B cell (primary cell): ENCODE measurements at regions of chr3 and their contacts with region 1.

Region 1: DNA sequence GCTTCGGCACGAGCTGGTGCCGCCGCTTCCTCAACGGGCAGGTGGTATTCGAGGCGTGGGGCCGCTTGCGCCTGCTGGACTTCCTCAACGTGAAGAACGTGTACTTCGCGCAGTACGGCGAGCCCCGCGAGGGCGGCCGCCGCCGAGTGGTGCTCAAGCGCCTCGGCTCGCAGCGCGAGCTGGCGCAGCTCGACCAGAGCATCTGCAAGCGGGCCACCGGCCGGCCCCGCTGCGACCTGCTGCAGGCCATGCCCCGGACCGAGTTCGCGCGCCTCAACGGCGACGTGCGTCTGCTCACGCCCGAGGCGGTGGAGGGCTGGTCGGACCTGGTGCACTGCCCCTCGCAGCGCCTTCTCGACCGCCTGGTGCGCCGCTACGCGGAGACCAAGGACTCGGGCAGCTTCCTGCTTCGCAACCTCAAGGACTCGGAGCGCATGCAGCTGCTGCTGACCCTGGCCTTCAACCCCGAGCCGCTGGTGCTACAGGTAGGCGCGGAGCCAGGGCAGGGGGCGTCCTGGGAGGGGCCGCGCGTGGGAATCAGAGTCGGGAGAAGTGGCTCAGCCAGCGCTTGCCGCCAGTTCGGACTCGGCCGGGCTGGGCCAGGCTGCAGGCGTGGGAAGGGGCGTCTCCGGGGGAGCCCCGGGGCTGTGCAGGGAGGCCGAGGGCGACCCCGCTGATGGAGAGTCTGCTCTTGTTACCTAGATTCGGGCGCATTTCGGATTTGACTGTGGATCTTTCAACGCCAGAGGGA is 1.1 kb downstream of the DIPK2A start:
- DNase-seq: peak; percentile 88
- ATAC-seq: peak; percentile 25
- H3K4me3 ChIP-seq: peak overlapping the region; percentile 84 to 92 (median 90)
- H3K4me3 Mint-ChIP-seq: peak overlapping the region; percentile 97
- H3K27ac ChIP-seq: peak overlapping the region; percentile 91 to 93
- H3K27ac Mint-ChIP-seq: peak overlapping the region; percentile 96
- H3K4me1 ChIP-seq: peaks cover 17 to 46% of the 10 kb centered on the region in 2 donors
- H3K4me1 Mint-ChIP-seq: peaks cover 40% of the 10 kb centered on the region
- H3K27me3 ChIP-seq: no peaks in the 10 kb centered on the region
- H3K27me3 Mint-ChIP-seq: no peaks in the 10 kb centered on the region
- CTCF ChIP-seq: peak; percentile 67

Region 2: GRCh38 chr3:142578327-142579223 is 1394.1 kb before region 1 on chr3 and contains the start of gene ATR:
- CTCF ChIA-PET with region 1: no interaction called
- POLR2A ChIA-PET with region 1: interaction called, 4 read pairs
- intact Hi-C with region 1: loop called (anchors 1 kb)
- DNase-seq: peak; percentile 97
- ATAC-seq: peak; percentile 94
- H3K4me3 ChIP-seq: peak within 1 kb of the TSS; percentile 70 to 91 (median 78)
- H3K4me3 Mint-ChIP-seq: peak within 1 kb of the TSS; percentile 93
- H3K27ac ChIP-seq: peak within 1 kb of the TSS; percentile 97 to 98
- H3K27ac Mint-ChIP-seq: peak within 1 kb of the TSS; percentile 98
- H3K4me1 ChIP-seq: peaks cover 27% of the 10 kb centered on the region in 2 donors
- H3K4me1 Mint-ChIP-seq: peaks cover 47% of the 10 kb centered on the region
- H3K27me3 ChIP-seq: peaks cover 0 to 7% (median 0%) of the 10 kb centered on the region in 4 experiments
- H3K27me3 Mint-ChIP-seq: peaks cover 9% of the 10 kb centered on the region
- CTCF ChIP-seq: no peak
- total RNA-seq, gene ATR: 46.7 and 47.4 TPM in 2 replicates

Region 3: GRCh38 chr3:143119009-143119914 is 853.4 kb before region 1 on chr3 and contains the start of gene CHST2:
- CTCF ChIA-PET with region 1: no interaction called
- POLR2A ChIA-PET with region 1: no interaction called
- intact Hi-C with region 1: loop called (anchors 5 kb)
- DNase-seq: peak; percentile 87
- ATAC-seq: peak; percentile 88
- H3K4me3 ChIP-seq: peak within 1 kb of the TSS; percentile 75 to 95 (median 91)
- H3K4me3 Mint-ChIP-seq: peak within 1 kb of the TSS; percentile 94
- H3K27ac ChIP-seq: peak within 1 kb of the TSS; percentile 63 to 72
- H3K27ac Mint-ChIP-seq: peak within 1 kb of the TSS; percentile 95
- H3K4me1 ChIP-seq: peaks cover 25 to 32% of the 10 kb centered on the region in 2 donors
- H3K4me1 Mint-ChIP-seq: peaks cover 31% of the 10 kb centered on the region
- H3K27me3 ChIP-seq: peaks cover 0 to 3% (median 0%) of the 10 kb centered on the region in 4 experiments
- H3K27me3 Mint-ChIP-seq: no peaks in the 10 kb centered on the region
- CTCF ChIP-seq: no peak
- total RNA-seq, gene CHST2: 24.8 and 25.0 TPM in 2 replicates

Region 4: GRCh38 chr3:143151004-143151731 is 821.5 kb before region 1 on chr3:
- CTCF ChIA-PET with region 1: no interaction called
- POLR2A ChIA-PET with region 1: no interaction called
- intact Hi-C with region 1: no loop called
- DNase-seq: no peak
- ATAC-seq: no peak
- H3K4me3 ChIP-seq: no peak overlapping the region
- H3K4me3 Mint-ChIP-seq: no peak overlapping the region
- H3K27ac ChIP-seq: no peak overlapping the region
- H3K27ac Mint-ChIP-seq: no peak overlapping the region
- H3K4me1 ChIP-seq: no peaks in the 10 kb centered on the region
- H3K4me1 Mint-ChIP-seq: peaks cover 7% of the 10 kb centered on the region
- H3K27me3 ChIP-seq: no peaks in the 10 kb centered on the region
- H3K27me3 Mint-ChIP-seq: no peaks in the 10 kb centered on the region
- CTCF ChIP-seq: no peak

Region 5: GRCh38 chr3:143847787-143848631 is 124.7 kb before region 1 on chr3 and contains the start of gene SLC9A9:
- CTCF ChIA-PET with region 1: no interaction called
- POLR2A ChIA-PET with region 1: no interaction called
- intact Hi-C with region 1: loop called (anchors 2 kb)
- DNase-seq: peak; percentile 61
- ATAC-seq: peak; percentile 85
- H3K4me3 ChIP-seq: peak within 1 kb of the TSS; percentile 60 to 99 (median 95)
- H3K4me3 Mint-ChIP-seq: peak within 1 kb of the TSS; percentile 99
- H3K27ac ChIP-seq: peak within 1 kb of the TSS; percentile 27 to 86
- H3K27ac Mint-ChIP-seq: peak within 1 kb of the TSS; percentile 95
- H3K4me1 ChIP-seq: peaks cover 8 to 15% of the 10 kb centered on the region in 2 donors
- H3K4me1 Mint-ChIP-seq: peaks cover 51% of the 10 kb centered on the region
- H3K27me3 ChIP-seq: no peaks in the 10 kb centered on the region
- H3K27me3 Mint-ChIP-seq: no peaks in the 10 kb centered on the region
- CTCF ChIP-seq: no peak
- total RNA-seq, gene SLC9A9: 17.3 and 18.7 TPM in 2 replicates

Region 6: DNA sequence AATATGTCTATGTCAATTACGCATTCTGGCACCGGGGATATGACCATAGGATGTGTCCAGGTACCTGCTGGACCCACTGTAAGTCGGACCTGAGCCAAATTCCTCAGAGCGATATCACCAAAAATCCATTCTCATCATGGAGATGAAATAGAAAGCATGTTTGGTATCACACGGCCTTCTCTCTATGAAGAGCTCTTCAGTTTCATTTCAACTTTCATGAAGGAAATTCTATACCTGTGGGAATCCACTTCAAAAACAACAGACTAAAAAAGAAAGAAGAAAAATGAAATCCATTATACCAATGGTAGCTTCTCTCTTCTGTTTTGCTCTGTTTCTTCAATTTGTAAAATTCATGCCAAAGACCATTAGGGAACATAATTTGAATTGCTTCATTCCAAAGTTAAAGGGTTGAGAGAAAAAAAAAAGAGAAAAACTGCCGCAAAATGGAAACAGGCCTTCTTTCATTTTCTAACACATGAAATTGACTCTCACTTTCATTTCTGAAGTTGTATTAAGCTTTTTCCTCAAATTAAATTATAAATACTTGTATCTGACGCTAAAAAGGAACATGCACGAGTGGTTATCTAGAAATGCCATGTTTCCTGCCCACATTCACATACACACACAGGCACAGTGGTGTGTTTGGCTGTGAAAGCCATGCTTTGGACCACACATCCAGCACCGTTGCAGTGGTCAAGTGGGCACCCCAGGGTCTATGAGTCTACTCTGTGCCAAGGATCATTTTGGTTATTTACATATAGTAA is 48.0 kb before region 1 on chr3:
- CTCF ChIA-PET with region 1: interaction called, 7 read pairs
- POLR2A ChIA-PET with region 1: interaction called, 19 read pairs
- intact Hi-C with region 1: loop called (anchors 2 kb)
- DNase-seq: peak; percentile 58
- ATAC-seq: peak; percentile 78
- H3K4me3 ChIP-seq: peak overlapping the region in 3 of 5 experiments; percentile 16 to 43 (median 25)
- H3K4me3 Mint-ChIP-seq: peak overlapping the region; percentile 84
- H3K27ac ChIP-seq: peak overlapping the region; percentile 73 to 86
- H3K27ac Mint-ChIP-seq: peak overlapping the region; percentile 96
- H3K4me1 ChIP-seq: peaks cover 68 to 76% of the 10 kb centered on the region in 2 donors
- H3K4me1 Mint-ChIP-seq: peaks cover 79% of the 10 kb centered on the region
- H3K27me3 ChIP-seq: no peaks in the 10 kb centered on the region
- H3K27me3 Mint-ChIP-seq: no peaks in the 10 kb centered on the region
- CTCF ChIP-seq: no peak

Region 7: DNA sequence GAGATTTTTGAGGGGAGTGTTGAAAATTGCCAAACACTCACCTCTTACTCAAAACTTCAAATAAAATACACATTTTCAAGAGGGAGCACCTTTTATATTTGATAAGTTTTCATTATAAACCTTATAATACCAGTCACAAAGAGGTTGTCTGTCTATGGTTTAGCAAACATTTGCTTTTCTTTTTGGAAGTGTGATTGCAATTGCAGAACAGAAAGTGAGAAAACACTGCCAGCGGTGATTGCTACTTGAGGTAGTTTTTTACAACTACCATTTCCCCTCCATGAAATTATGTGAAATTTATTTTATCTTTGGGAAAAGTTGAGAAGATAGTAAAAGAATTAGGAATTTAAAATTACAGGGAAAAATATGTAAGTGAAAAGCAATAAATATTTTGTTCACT is 19.0 kb after region 1 on chr3:
- CTCF ChIA-PET with region 1: interaction called, 8 read pairs
- POLR2A ChIA-PET with region 1: no interaction called
- intact Hi-C with region 1: loop called (anchors 2 kb)
- DNase-seq: no peak
- ATAC-seq: no peak
- H3K4me3 ChIP-seq: no peak overlapping the region
- H3K4me3 Mint-ChIP-seq: no peak overlapping the region
- H3K27ac ChIP-seq: no peak overlapping the region
- H3K27ac Mint-ChIP-seq: no peak overlapping the region
- H3K4me1 ChIP-seq: no peaks in the 10 kb centered on the region
- H3K4me1 Mint-ChIP-seq: peaks cover 31% of the 10 kb centered on the region
- H3K27me3 ChIP-seq: no peaks in the 10 kb centered on the region
- H3K27me3 Mint-ChIP-seq: no peaks in the 10 kb centered on the region
- CTCF ChIP-seq: no peak

Region 8: GRCh38 chr3:144102421-144102820 is 129.7 kb after region 1 on chr3:
- CTCF ChIA-PET with region 1: no interaction called
- POLR2A ChIA-PET with region 1: no interaction called
- intact Hi-C with region 1: no loop called
- DNase-seq: no peak
- ATAC-seq: no peak
- H3K4me3 ChIP-seq: no peak overlapping the region
- H3K4me3 Mint-ChIP-seq: no peak overlapping the region
- H3K27ac ChIP-seq: no peak overlapping the region
- H3K27ac Mint-ChIP-seq: no peak overlapping the region
- H3K4me1 ChIP-seq: no peaks in the 10 kb centered on the region
- H3K4me1 Mint-ChIP-seq: no peaks in the 10 kb centered on the region
- H3K27me3 ChIP-seq: peaks cover 0 to 6% (median 0%) of the 10 kb centered on the region in 4 experiments
- H3K27me3 Mint-ChIP-seq: peaks cover 8% of the 10 kb centered on the region
- CTCF ChIP-seq: no peak

Region 9: GRCh38 chr3:144162079-144162478 is 189.4 kb after region 1 on chr3:
- CTCF ChIA-PET with region 1: no interaction called
- POLR2A ChIA-PET with region 1: no interaction called
- intact Hi-C with region 1: no loop called
- DNase-seq: no peak
- ATAC-seq: no peak
- H3K4me3 ChIP-seq: no peak overlapping the region
- H3K4me3 Mint-ChIP-seq: no peak overlapping the region
- H3K27ac ChIP-seq: no peak overlapping the region
- H3K27ac Mint-ChIP-seq: no peak overlapping the region
- H3K4me1 ChIP-seq: peaks cover 0 to 3% of the 10 kb centered on the region in 2 donors
- H3K4me1 Mint-ChIP-seq: peaks cover 4% of the 10 kb centered on the region
- H3K27me3 ChIP-seq: peaks cover 0 to 3% (median 0%) of the 10 kb centered on the region in 4 experiments
- H3K27me3 Mint-ChIP-seq: no peaks in the 10 kb centered on the region
- CTCF ChIP-seq: no peak

Region 10: GRCh38 chr3:144770915-144771351 is 798.3 kb after region 1 on chr3:
- CTCF ChIA-PET with region 1: no interaction called
- POLR2A ChIA-PET with region 1: no interaction called
- intact Hi-C with region 1: loop called (anchors 5 kb)
- DNase-seq: peak; percentile 3
- ATAC-seq: no peak
- H3K4me3 ChIP-seq: no peak overlapping the region
- H3K4me3 Mint-ChIP-seq: no peak overlapping the region
- H3K27ac ChIP-seq: no peak overlapping the region
- H3K27ac Mint-ChIP-seq: no peak overlapping the region
- H3K4me1 ChIP-seq: no peaks in the 10 kb centered on the region
- H3K4me1 Mint-ChIP-seq: no peaks in the 10 kb centered on the region
- H3K27me3 ChIP-seq: no peaks in the 10 kb centered on the region
- H3K27me3 Mint-ChIP-seq: no peaks in the 10 kb centered on the region
- CTCF ChIP-seq: no peak